Posterior vena cava (tissue), 2 donors: ENCODE measurements at regions of chr1 and their contacts with region 1.

Region 1: GRCh38 chr1:161374373-161374772 is 6.7 kb upstream of the CFAP126 start:
- DNase-seq: no peak

Region 2: GRCh38 chr1:161314201-161314981 is 60.0 kb before region 1 on chr1 and contains the start of gene SDHC:
- intact Hi-C with region 1: loop called in 1 of 2 experiments (anchors 10 kb)
- DNase-seq: peak; percentile 97
- total RNA-seq, gene SDHC: 119 to 123 TPM

Region 3: DNA sequence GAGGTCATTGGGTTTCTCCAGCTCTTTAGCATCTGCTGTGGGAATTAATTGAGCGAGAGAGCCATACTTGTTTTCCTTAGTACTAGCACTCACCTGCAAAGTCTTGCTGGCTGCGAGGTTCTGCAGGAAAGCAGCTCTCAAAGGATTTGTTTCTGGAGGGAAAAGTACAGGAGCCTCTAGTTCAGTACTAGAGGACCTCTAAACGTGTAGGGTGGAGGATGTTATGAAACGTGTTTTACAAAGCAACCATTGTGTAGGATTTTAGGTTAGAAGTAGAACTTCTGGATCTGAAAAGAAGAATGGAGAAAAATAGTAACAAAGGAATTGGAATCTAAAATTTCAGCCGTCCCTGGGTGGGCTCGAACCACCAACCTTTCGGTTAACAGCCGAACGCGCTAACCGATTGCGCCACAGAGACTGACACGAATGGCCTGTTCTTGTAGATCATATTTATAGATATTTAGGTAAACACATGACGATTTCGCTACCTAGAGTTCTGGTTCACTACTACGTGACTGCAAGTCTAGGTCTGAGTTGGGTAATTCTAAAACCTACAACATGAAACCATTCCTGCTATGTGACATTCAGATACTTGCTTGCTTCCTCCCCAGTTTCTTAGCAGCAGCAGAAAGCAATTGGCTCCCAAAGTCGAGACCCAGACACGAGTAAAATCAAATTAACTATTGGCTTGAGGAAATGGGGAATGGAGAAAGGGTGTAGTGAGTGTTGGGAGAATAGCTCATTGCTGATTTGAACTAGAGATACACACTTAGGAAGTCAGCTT is 53.6 kb after region 1 on chr1:
- intact Hi-C with region 1: no loop called
- DNase-seq: no peak